Activated T-helper 2 cell treated with anti-CD3 and anti-CD28 coated beads, Interferon-gamma antibody, Interleukin-2, Interleukin-4, amounts not matched to agents 10 μg/mL and 5 μg/mL and 100 μg/mL, durations not matched to agents 14 hours and 24 hours and 36 hours (primary cell): ENCODE measurements at regions of chr7 and their contacts with region 1.

Region 1: GRCh38 chr7:92134271-92135051 is at the start of gene CYP51A1:
- DNase-seq: peak; percentile 92
- H3K4me3 Mint-ChIP-seq: peak within 1 kb of the TSS; percentile 99
- H3K27ac Mint-ChIP-seq: peak within 1 kb of the TSS; percentile 99
- H3K4me1 Mint-ChIP-seq: peaks cover 41% of the 10 kb centered on the region
- H3K27me3 Mint-ChIP-seq: no peaks in the 10 kb centered on the region
- total RNA-seq, gene CYP51A1: 133 and 139 TPM in 2 replicates

Region 2: GRCh38 chr7:91880413-91881241 is 253.8 kb before region 1 on chr7 and contains the start of gene MTERF1:
- intact Hi-C with region 1: loop called (anchors 1 kb)
- DNase-seq: peak; percentile 88
- H3K4me3 Mint-ChIP-seq: peak within 1 kb of the TSS; percentile 95
- H3K27ac Mint-ChIP-seq: peak within 1 kb of the TSS; percentile 93
- H3K4me1 Mint-ChIP-seq: peaks cover 32% of the 10 kb centered on the region
- H3K27me3 Mint-ChIP-seq: no peaks in the 10 kb centered on the region
- total RNA-seq, gene MTERF1: 16.2 and 19.9 TPM in 2 replicates

Region 3: GRCh38 chr7:91940572-91941341 is 193.7 kb before region 1 on chr7 and contains the start of gene AKAP9:
- intact Hi-C with region 1: loop called (anchors 2 kb)
- DNase-seq: peak; percentile 87
- H3K4me3 Mint-ChIP-seq: peak within 1 kb of the TSS; percentile 88
- H3K27ac Mint-ChIP-seq: peak within 1 kb of the TSS; percentile 93
- H3K4me1 Mint-ChIP-seq: peaks cover 28% of the 10 kb centered on the region
- H3K27me3 Mint-ChIP-seq: peaks cover 6% of the 10 kb centered on the region
- total RNA-seq, gene AKAP9: 36.2 and 38.3 TPM in 2 replicates

Region 4: GRCh38 chr7:92178927-92179924 is 44.8 kb after region 1 on chr7 and contains the start of gene LRRD1:
- intact Hi-C with region 1: loop called (anchors 2 kb)
- DNase-seq: peak; percentile 85
- H3K4me3 Mint-ChIP-seq: peak within 1 kb of the TSS; percentile 69
- H3K27ac Mint-ChIP-seq: no peak within 1 kb of the TSS
- H3K4me1 Mint-ChIP-seq: peaks cover 9% of the 10 kb centered on the region
- H3K27me3 Mint-ChIP-seq: peaks cover 27% of the 10 kb centered on the region
- total RNA-seq, gene LRRD1: 0.09 TPM in 1 of 2 replicates, not detected in the other